Activated CD8-positive, alpha-beta T cell treated with anti-CD3 and anti-CD28 coated beads, Interleukin-2, amount 10 ng/mL, durations not matched to agents 7 days and 5 days (primary cell): ENCODE measurements at regions of chr16 and their contacts with region 1.

Region 1: GRCh38 chr16:57576429-57576870 is 34.0 kb downstream of the ADGRG5 start:
- DNase-seq: peak; percentile 93
- ATAC-seq: peak; percentile 72
- H3K4me3 Mint-ChIP-seq: peak overlapping the region; percentile 2
- H3K27ac Mint-ChIP-seq: peak overlapping the region; percentile 82
- H3K4me1 Mint-ChIP-seq: peaks cover 67% of the 10 kb centered on the region
- H3K27me3 Mint-ChIP-seq: no peaks in the 10 kb centered on the region

Region 2: GRCh38 chr16:57432989-57433388 is 143.5 kb before region 1 on chr16:
- CTCF ChIA-PET with region 1: no interaction called
- POLR2A ChIA-PET with region 1: no interaction called
- DNase-seq: no peak
- ATAC-seq: no peak
- H3K4me3 Mint-ChIP-seq: no peak overlapping the region
- H3K27ac Mint-ChIP-seq: peak overlapping the region; percentile 18
- H3K4me1 Mint-ChIP-seq: peaks cover 12% of the 10 kb centered on the region
- H3K27me3 Mint-ChIP-seq: no peaks in the 10 kb centered on the region

Region 3: GRCh38 chr16:57544119-57544653 is 32.3 kb before region 1 on chr16:
- CTCF ChIA-PET with region 1: interaction called, 31 read pairs
- POLR2A ChIA-PET with region 1: no interaction called
- DNase-seq: peak; percentile 24
- ATAC-seq: no peak
- H3K4me3 Mint-ChIP-seq: peak overlapping the region; percentile 85
- H3K27ac Mint-ChIP-seq: peak overlapping the region; percentile 84
- H3K4me1 Mint-ChIP-seq: peaks cover 68% of the 10 kb centered on the region
- H3K27me3 Mint-ChIP-seq: no peaks in the 10 kb centered on the region

Region 4: GRCh38 chr16:57600048-57600835 is 23.8 kb after region 1 on chr16:
- CTCF ChIA-PET with region 1: interaction called, 93 read pairs
- POLR2A ChIA-PET with region 1: interaction called, 12 read pairs
- DNase-seq: peak; percentile 44
- ATAC-seq: peak; percentile 16
- H3K4me3 Mint-ChIP-seq: peak overlapping the region; percentile 8
- H3K27ac Mint-ChIP-seq: peak overlapping the region; percentile 99
- H3K4me1 Mint-ChIP-seq: peaks cover 67% of the 10 kb centered on the region
- H3K27me3 Mint-ChIP-seq: no peaks in the 10 kb centered on the region

Region 5: GRCh38 chr16:57648590-57649442 is 72.4 kb after region 1 on chr16:
- CTCF ChIA-PET with region 1: interaction called, 244 read pairs
- POLR2A ChIA-PET with region 1: interaction called, 11 read pairs
- DNase-seq: peak; percentile 93
- ATAC-seq: peak; percentile 67
- H3K4me3 Mint-ChIP-seq: no peak overlapping the region
- H3K27ac Mint-ChIP-seq: peak overlapping the region; percentile 82
- H3K4me1 Mint-ChIP-seq: peaks cover 59% of the 10 kb centered on the region
- H3K27me3 Mint-ChIP-seq: no peaks in the 10 kb centered on the region

Region 6: DNA sequence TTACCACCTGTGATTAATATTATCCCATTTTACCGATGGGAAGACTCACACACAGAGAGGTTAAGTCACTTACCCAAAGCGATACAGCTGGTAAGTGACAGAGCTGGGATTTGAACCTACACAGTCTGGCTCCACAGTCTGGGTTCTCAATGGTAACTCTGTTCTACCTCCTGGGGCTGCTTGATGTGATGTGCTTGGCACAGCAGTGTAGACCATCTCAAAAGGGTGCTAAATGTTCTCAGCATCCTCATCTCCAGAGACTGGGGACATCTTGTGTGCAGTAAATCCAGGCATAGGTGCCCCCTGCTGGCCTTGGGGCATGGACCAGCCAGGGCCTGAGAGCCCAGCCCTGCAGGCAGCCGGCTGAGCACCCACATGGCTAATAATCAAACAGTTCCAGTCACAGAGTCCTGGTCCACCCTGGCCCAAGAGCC is 143.7 kb after region 1 on chr16:
- CTCF ChIA-PET with region 1: interaction called, 17 read pairs
- POLR2A ChIA-PET with region 1: no interaction called
- DNase-seq: peak; percentile 79
- ATAC-seq: peak; percentile 95
- H3K4me3 Mint-ChIP-seq: no peak overlapping the region
- H3K27ac Mint-ChIP-seq: no peak overlapping the region
- H3K4me1 Mint-ChIP-seq: peaks cover 4% of the 10 kb centered on the region
- H3K27me3 Mint-ChIP-seq: peaks cover 6% of the 10 kb centered on the region

Region 7: GRCh38 chr16:58000706-58001676 is 424.5 kb after region 1 on chr16 and contains the start of gene USB1:
- CTCF ChIA-PET with region 1: interaction called, 28 read pairs
- POLR2A ChIA-PET with region 1: no interaction called
- DNase-seq: peak; percentile 85
- ATAC-seq: peak; percentile 75
- H3K4me3 Mint-ChIP-seq: peak within 1 kb of the TSS; percentile 96
- H3K27ac Mint-ChIP-seq: peak within 1 kb of the TSS; percentile 91
- H3K4me1 Mint-ChIP-seq: peaks cover 54% of the 10 kb centered on the region
- H3K27me3 Mint-ChIP-seq: no peaks in the 10 kb centered on the region
- total RNA-seq, gene USB1: 67.0 to 68.6 TPM